Posterior vena cava (tissue), 2 donors: ENCODE measurements at regions of chr7 and their contacts with region 1.

Region 1: DNA sequence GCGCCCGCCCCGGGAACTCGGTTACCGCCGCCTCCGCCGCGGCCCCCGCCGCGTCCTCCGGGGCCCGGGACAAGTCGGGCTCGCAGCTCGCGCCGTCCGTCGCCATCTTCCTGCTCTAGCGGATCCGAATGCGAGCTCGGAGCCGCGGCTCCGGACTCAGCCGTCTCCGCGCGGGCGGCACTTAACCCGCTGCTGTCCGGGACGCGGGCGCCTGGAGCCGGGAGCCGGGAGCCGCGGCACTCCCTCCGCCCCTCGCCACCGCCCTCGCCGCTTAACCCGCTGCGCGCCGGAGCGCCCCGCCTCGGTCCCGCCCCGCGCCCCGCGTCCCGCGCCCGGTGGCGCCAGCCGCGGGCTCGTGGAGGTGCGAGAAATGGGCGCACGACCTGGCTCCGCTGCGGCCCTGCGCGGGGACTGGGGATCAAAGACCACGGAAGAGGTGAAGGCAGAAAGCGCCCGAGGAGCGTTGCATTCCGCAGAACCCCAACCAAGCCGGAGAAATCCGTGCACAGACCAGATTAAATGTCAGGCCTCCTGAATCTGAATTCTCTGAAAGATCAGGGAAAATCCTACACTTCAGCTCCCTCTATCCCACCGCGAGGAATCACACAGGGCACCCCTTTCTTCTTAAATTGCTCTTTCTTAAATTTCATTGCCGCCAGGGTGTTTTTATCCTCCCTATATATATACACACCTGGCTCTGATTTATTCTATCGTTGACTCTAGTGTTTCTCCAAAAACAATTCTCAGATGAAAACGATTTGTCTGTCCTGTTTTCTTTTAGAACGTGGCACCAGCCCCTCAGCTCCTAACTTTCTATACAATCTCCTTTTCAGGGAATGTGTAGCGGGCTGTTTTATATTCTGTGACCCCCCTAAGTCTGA is at the start of gene CTTNBP2:
- DNase-seq: peak; percentile 88
- total RNA-seq, gene CTTNBP2: 7.9 to 9.1 TPM

Region 2: GRCh38 chr7:117750612-117751563 is 122.7 kb before region 1 on chr7:
- intact Hi-C with region 1: loop called in 1 of 2 experiments (anchors 10 kb)
- DNase-seq: no peak

Region 3: GRCh38 chr7:117777335-117778150 is 96.0 kb before region 1 on chr7:
- intact Hi-C with region 1: loop called in 1 of 2 experiments (anchors 10 kb)
- DNase-seq: no peak

Region 4: DNA sequence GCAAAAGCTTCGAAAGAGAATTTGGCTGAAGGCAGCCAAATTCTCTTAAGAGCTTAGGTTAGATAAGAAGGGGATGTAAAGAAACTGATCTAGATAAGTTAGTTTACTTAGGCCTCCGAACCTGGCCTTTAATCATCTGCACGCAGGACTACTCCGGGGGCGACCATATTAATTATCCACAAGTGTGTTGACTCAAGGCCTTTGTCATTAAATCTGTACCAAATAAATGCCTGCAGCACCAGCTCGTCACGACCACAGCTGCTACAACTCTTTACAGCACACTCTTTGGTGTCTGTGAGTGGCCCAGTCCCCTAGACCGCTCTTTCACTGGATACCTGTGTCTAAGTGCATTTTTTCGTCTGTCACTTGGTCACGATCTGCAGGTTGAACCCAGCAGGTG is 240.6 kb after region 1 on chr7:
- intact Hi-C with region 1: no loop called
- DNase-seq: no peak